K562 (cell line): ENCODE measurements at regions of chr3 and their contacts with region 1.

Region 1: GRCh38 chr3:194404365-194405140 is 5.5 kb upstream of the GP5 start:
- DNase-seq: peak in 1 of 4 experiments; percentile 73
- ATAC-seq: 0 out of 3 replicates have a peak, but pooled peaks have one; percentile 33
- H3K4me3 ChIP-seq: no peak overlapping the region
- H3K27ac ChIP-seq: no peak overlapping the region
- H3K4me1 ChIP-seq: no peaks in the 10 kb centered on the region; a peak in 2 of 5 replicates
- H3K27me3 ChIP-seq: no peaks in the 10 kb centered on the region
- CTCF ChIP-seq: peak; percentile 46 to 81 (median 58); a peak in 5 of 6 replicates
- EP300 ChIP-seq: no peak
- POLR2A ChIP-seq: no peak
- RAD21 ChIP-seq: peak; percentile 69 to 79

Region 2: DNA sequence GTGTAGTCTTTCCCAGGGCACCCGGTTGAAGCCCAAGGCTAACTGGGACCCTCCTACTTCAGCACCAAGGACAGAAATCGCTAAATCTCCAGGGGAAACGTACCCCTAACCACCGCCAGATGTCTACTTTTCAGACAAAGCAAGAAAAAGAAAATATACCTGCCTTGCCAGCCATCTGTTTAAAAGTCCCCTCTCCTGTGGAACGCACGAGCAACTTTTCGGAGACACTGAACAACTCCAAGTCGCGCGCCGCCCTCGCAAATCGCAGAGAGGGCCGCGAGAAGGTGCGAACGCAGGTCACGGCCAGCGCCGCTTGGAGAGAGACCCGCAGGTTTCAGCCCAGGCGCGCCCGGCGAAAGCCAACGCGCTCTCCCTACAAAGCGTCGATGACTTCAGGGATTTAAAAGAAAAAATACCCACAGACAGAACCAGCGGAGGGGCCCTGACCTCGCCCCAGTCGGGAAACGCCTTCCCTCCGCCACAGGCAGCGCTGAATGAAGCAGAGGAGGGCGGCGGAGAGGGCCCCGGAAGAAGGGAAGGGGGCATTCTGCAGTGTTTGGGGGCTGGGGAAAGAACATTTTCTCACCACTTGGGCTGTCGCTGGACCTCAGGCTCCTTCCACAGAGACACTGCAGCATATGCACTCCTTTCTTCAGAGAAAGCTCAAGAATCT is 1890.3 kb before region 1 on chr3:
- CTCF ChIA-PET with region 1: no interaction called
- POLR2A ChIA-PET with region 1: no interaction called
- in situ Hi-C with region 1: no loop called
- intact Hi-C with region 1: no loop called
- DNase-seq: peak; percentile 2 to 13 (median 8)
- ATAC-seq: no peak
- H3K4me3 ChIP-seq: no peak overlapping the region
- H3K27ac ChIP-seq: no peak overlapping the region
- H3K4me1 ChIP-seq: no peaks in the 10 kb centered on the region
- H3K27me3 ChIP-seq: no peaks in the 10 kb centered on the region
- CTCF ChIP-seq: no peak
- EP300 ChIP-seq: no peak
- POLR2A ChIP-seq: no peak
- RAD21 ChIP-seq: no peak

Region 3: GRCh38 chr3:194344012-194344411 is 60.5 kb before region 1 on chr3:
- CTCF ChIA-PET with region 1: interaction called, 5 read pairs
- POLR2A ChIA-PET with region 1: no interaction called
- in situ Hi-C with region 1: loop called (anchors 5 kb)
- intact Hi-C with region 1: loop called (anchors 2 kb)
- DNase-seq: peak; percentile 81 to 84 (median 82)
- ATAC-seq: peak; percentile 89
- H3K4me3 ChIP-seq: no peak overlapping the region
- H3K27ac ChIP-seq: no peak overlapping the region
- H3K4me1 ChIP-seq: peaks cover 0 to 6% of the 10 kb centered on the region in 2 experiments; a peak in 1 of 5 replicates
- H3K27me3 ChIP-seq: peaks cover 27 to 65% of the 10 kb centered on the region in 2 experiments; a peak in 4 of 5 replicates
- CTCF ChIP-seq: peak; percentile 87 to 94 (median 89)
- EP300 ChIP-seq: no peak
- POLR2A ChIP-seq: no peak
- RAD21 ChIP-seq: peak; percentile 58 to 75

Region 4: GRCh38 chr3:194497821-194498598 is 93.5 kb after region 1 on chr3:
- CTCF ChIA-PET with region 1: no interaction called
- POLR2A ChIA-PET with region 1: no interaction called
- in situ Hi-C with region 1: no loop called
- intact Hi-C with region 1: no loop called
- DNase-seq: no peak
- ATAC-seq: peak; percentile 49
- H3K4me3 ChIP-seq: no peak overlapping the region
- H3K27ac ChIP-seq: no peak overlapping the region
- H3K4me1 ChIP-seq: peaks cover 0 to 10% of the 10 kb centered on the region in 2 experiments; a peak in 4 of 5 replicates
- H3K27me3 ChIP-seq: no peaks in the 10 kb centered on the region
- CTCF ChIP-seq: no peak
- EP300 ChIP-seq: no peak
- POLR2A ChIP-seq: no peak
- RAD21 ChIP-seq: no peak